Tibial artery (tissue), 4 donors: ENCODE measurements at regions of chr4 and their contacts with region 1.

Region 1: DNA sequence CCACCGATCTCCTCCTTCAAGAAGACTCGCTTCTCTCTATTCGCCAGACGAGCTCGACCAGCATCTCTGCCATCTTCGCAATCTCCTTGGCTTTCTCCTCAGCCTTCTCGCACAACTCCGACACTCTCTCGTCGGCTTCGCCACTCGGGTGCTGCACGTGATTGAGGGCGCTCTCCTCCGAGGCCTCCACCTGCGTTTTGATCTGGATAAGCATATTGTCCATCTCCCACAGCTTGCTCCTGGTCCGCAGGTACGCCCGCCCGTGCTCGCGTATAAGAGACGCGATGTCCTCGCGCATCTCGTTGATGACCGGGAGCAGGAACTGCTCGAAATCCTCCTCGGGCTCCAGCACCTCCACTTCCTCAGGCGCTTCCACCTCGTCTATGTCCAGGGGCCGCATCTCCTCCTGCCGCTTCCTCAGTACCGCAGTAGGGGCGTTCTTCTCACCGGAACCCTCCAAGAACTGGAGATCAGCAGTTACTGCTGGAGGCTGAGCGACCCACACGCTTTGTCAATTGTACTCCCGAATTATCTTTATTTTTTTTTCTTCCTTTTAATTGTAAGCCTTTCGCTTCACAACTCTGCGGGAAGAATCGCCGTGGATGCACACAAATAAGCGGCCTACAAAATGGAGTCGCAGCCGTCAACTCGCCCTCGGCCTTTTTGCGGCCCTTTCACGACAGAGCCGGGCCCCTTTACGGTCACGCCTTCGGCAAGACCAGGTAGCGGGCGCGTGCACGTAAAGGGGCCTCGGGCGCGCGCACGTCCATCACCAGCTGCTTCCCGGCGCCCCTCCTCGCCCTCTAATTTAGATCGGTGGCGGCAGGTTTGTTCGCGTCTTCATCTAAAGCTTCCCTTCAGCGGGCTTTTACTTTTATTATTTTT is at the start of gene MRFAP1L1:
- DNase-seq: peak; percentile 96 to 98
- H3K4me3 ChIP-seq: peak within 1 kb of the TSS; percentile 75 to 88
- H3K27ac ChIP-seq: peak within 1 kb of the TSS; percentile 82 to 85
- H3K4me1 ChIP-seq: peaks cover 5 to 40% (median 24%) of the 10 kb centered on the region in 4 donors
- H3K27me3 ChIP-seq: no peaks in the 10 kb centered on the region
- CTCF ChIP-seq: peak in 1 of 2 experiments; percentile 9

Region 2: GRCh38 chr4:6640292-6641163 is 68.9 kb before region 1 on chr4 and contains the start of gene MRFAP1:
- intact Hi-C with region 1: loop called (anchors 5 kb)
- DNase-seq: peak; percentile 93 to 97
- H3K4me3 ChIP-seq: peak within 1 kb of the TSS; percentile 89 to 93
- H3K27ac ChIP-seq: peak within 1 kb of the TSS; percentile 93 to 97
- H3K4me1 ChIP-seq: peaks cover 0 to 40% (median 24%) of the 10 kb centered on the region in 4 donors
- H3K27me3 ChIP-seq: no peaks in the 10 kb centered on the region
- CTCF ChIP-seq: no peak